Activated B cell treated with CpG ODN at 0.5 μM for 24 hours (primary cell): ENCODE measurements at regions of chr10 and their contacts with region 1.

Region 1: GRCh38 chr10:68560186-68560942 is at the start of gene TET1:
- DNase-seq: peak; percentile 24
- ATAC-seq: peak; percentile 47
- H3K4me3 Mint-ChIP-seq: peak within 1 kb of the TSS; percentile 78
- H3K27ac Mint-ChIP-seq: no peak within 1 kb of the TSS
- H3K4me1 Mint-ChIP-seq: peaks cover 30% of the 10 kb centered on the region
- H3K27me3 Mint-ChIP-seq: peaks cover 58% of the 10 kb centered on the region
- CTCF ChIP-seq: no peak
- total RNA-seq, gene TET1: 0.54 and 0.69 TPM in 2 replicates

Region 2: DNA sequence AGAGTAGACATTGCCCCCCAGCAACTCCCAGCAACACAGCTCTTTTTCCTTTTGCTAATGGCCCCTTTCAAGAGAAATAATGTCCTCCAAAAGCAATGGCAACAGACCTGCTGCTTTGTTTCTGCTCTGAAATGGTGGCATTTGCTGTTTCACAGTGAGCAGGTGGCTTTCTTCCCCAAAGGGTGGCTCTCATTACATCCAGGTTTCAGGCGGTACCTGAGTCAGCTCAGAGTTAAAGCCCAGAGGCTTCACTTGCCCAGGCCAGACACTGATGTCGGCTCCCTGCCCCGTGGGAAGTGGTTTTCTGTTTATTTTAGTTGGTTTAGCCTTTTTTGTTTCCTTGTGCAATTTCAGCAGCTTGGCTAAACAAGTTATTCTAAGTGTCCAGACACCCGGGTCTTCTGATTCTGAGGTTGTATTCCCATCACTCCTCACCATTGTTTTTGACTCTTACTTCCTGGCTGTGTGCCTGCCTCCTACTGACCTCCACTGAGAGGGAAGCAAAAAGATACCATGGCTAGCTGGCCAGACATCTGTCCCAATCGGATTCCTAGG is 320.7 kb before region 1 on chr10:
- CTCF ChIA-PET with region 1: no interaction called
- POLR2A ChIA-PET with region 1: no interaction called
- intact Hi-C with region 1: no loop called
- DNase-seq: no peak
- ATAC-seq: no peak
- H3K4me3 Mint-ChIP-seq: no peak overlapping the region
- H3K27ac Mint-ChIP-seq: no peak overlapping the region
- H3K4me1 Mint-ChIP-seq: no peaks in the 10 kb centered on the region
- H3K27me3 Mint-ChIP-seq: no peaks in the 10 kb centered on the region
- CTCF ChIP-seq: no peak

Region 3: DNA sequence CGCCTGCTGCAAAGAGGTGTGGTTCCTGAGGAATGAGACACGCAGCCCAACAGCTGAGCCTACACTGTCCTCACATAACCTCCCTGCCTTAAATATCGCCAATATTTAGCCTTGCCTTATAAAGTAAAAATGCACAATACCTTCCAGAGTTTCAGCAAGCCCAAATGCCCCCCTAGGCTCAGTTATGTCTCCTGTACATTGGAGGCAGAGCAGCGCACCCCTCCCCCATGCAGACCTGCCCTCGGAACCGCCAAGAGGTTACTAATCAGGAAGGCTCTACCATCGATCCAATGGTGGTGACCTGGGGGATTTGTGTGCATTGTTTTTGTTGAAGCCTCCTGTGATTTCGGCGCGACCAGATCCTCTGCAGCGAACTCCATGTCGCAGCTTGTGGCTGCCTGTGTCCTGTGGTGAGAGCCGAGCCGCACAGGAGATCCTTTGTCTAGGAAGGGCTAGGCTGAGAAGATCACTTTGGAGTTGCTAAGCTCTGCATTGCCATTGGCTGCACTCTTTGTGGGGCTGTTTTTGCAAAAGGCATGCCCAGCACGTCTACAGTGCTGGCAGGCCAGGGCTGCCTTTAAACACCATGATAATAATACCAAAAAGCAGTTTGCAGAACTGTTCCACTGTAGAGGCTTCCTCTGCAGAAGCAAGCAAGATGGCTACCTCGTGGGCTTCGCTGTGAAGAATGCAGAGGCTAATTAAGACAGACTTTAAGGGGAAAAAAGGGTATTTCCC is 39.8 kb after region 1 on chr10:
- CTCF ChIA-PET with region 1: no interaction called
- POLR2A ChIA-PET with region 1: interaction called, 5 read pairs
- intact Hi-C with region 1: loop called (anchors 1 kb)
- DNase-seq: peak; percentile 31
- ATAC-seq: peak; percentile 79
- H3K4me3 Mint-ChIP-seq: peak overlapping the region; percentile 90
- H3K27ac Mint-ChIP-seq: peak overlapping the region; percentile 83
- H3K4me1 Mint-ChIP-seq: peaks cover 24% of the 10 kb centered on the region
- H3K27me3 Mint-ChIP-seq: no peaks in the 10 kb centered on the region
- CTCF ChIP-seq: no peak

Region 4: GRCh38 chr10:68826764-68827591 is 266.6 kb after region 1 on chr10 and contains the start of gene STOX1:
- CTCF ChIA-PET with region 1: no interaction called
- POLR2A ChIA-PET with region 1: no interaction called
- intact Hi-C with region 1: loop called (anchors 10 kb)
- DNase-seq: peak; percentile 52
- ATAC-seq: peak; percentile 68
- H3K4me3 Mint-ChIP-seq: peak within 1 kb of the TSS; percentile 75
- H3K27ac Mint-ChIP-seq: no peak within 1 kb of the TSS
- H3K4me1 Mint-ChIP-seq: peaks cover 7% of the 10 kb centered on the region
- H3K27me3 Mint-ChIP-seq: peaks cover 3% of the 10 kb centered on the region
- CTCF ChIP-seq: no peak
- total RNA-seq, gene STOX1: 0.10 and 0.16 TPM in 2 replicates